Caco-2 (cell line): ENCODE measurements at regions of chr4 and their contacts with region 1.

Region 1: DNA sequence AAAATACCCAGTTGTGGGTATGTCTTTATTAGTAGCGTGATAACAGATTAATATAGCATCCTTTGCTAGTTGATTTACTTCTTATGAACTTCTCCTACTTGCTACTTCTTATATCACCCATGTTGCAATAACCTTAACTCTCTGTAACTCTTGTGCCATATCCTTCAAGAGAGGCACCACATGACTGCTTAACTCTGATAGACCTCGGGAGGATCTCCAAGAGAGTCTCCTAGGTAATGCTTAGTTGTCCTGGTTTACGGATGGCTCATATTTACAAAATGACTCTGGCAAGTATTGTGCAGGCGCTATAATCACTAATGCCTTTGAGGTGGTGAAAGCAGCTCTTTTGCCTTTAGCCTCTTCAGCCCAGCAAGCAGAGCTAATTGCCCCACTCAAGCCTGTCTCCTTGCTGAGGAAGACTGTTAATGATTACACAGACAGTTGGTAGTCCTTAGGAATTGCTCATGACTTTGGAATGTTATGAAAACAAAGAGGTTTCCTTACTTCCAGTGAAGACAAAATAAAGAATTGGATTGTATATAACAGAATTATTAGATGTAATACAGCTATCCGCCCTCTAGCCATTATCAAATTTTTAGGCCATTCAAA is 1305.8 kb downstream of the PCDH7 start:
- DNase-seq: peak; percentile 67 to 77
- H3K4me3 ChIP-seq: no peak overlapping the region
- H3K4me3 Mint-ChIP-seq: peak overlapping the region; percentile 29
- H3K27ac Mint-ChIP-seq: peak overlapping the region; percentile 85
- H3K4me1 ChIP-seq: peaks cover 47% of the 10 kb centered on the region
- H3K4me1 Mint-ChIP-seq: peaks cover 46% of the 10 kb centered on the region
- H3K27me3 ChIP-seq: no peaks in the 10 kb centered on the region
- H3K27me3 Mint-ChIP-seq: no peaks in the 10 kb centered on the region
- CTCF ChIP-seq: no peak

Region 2: DNA sequence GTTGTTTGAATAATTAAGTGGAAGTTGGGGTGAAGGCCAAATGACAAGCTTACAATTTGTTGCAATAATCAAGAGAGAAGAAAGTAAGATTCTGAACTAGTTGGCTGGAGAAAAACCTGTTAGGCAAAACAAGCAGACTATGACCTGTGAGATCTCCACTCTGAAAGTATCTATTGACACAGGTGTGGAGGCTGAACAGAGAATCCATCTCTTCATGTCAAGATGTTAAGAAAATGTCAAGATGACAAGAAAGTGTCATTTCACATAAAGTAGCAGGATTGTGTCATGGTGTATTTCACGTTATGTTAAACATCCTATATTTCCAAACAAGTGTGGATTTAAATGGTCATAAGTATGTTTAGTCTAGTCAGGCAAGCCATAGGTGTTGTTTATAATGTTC is 34.0 kb before region 1 on chr4:
- CTCF ChIA-PET with region 1: no interaction called
- POLR2A ChIA-PET with region 1: no interaction called
- intact Hi-C with region 1: loop called (anchors 2 kb)
- DNase-seq: peak in 1 of 2 experiments; percentile 42
- H3K4me3 ChIP-seq: no peak overlapping the region
- H3K4me3 Mint-ChIP-seq: no peak overlapping the region
- H3K27ac Mint-ChIP-seq: peak overlapping the region; percentile 49
- H3K4me1 ChIP-seq: peaks cover 26% of the 10 kb centered on the region
- H3K4me1 Mint-ChIP-seq: peaks cover 24% of the 10 kb centered on the region
- H3K27me3 ChIP-seq: no peaks in the 10 kb centered on the region
- H3K27me3 Mint-ChIP-seq: no peaks in the 10 kb centered on the region
- CTCF ChIP-seq: no peak

Region 3: DNA sequence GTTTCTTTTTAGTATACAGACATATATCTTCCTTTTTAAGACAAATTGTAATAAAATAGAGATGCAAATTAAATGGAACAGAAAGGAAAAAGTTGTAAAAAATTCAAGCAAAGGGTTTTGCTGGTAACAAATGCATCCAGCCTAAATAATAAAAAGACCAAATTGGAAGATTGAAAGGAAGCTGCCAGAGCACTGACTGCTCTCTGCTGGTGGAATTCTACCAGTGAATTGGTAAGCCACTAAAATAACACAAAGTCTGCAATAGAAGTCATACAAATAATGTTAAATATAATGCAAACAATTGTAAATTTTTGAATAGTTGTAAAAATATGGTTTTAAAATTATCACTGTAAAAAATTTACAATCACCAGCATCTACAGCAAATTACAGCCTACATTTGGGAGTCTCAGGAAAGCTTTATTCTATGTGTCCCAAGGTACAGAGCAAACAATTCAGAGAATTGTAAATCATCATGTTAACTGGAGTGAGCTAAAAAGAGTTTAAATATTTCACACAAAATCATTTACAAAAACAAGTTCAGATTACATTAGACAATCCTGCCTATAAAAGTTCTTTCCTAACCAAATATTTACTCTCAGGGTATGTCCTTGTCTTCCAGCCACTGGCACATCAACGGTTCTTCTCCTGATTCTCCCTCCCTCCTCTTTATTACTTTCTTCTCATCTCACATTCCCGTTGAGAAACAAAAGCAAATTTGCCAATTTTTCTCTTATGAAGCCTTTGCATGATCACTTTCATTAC is 16.7 kb after region 1 on chr4:
- CTCF ChIA-PET with region 1: no interaction called
- POLR2A ChIA-PET with region 1: no interaction called
- intact Hi-C with region 1: no loop called
- DNase-seq: no peak
- H3K4me3 ChIP-seq: no peak overlapping the region
- H3K4me3 Mint-ChIP-seq: no peak overlapping the region
- H3K27ac Mint-ChIP-seq: no peak overlapping the region
- H3K4me1 ChIP-seq: peaks cover 3% of the 10 kb centered on the region; the same call in 1 of the 2 replicates
- H3K4me1 Mint-ChIP-seq: no peaks in the 10 kb centered on the region
- H3K27me3 ChIP-seq: no peaks in the 10 kb centered on the region
- H3K27me3 Mint-ChIP-seq: no peaks in the 10 kb centered on the region
- CTCF ChIP-seq: peak in 1 of 2 experiments; percentile 28